MCF 10A (cell line): ENCODE measurements at regions of chr11 and their contacts with region 1.

Region 1: GRCh38 chr11:17063171-17064002 is 14.1 kb downstream of the RPS13 start:
- DNase-seq: peak; percentile 65
- H3K4me3 Mint-ChIP-seq: no peak overlapping the region
- H3K27ac Mint-ChIP-seq: no peak overlapping the region
- H3K4me1 Mint-ChIP-seq: no peaks in the 10 kb centered on the region
- H3K27me3 Mint-ChIP-seq: no peaks in the 10 kb centered on the region
- CTCF ChIP-seq: peak; percentile 80

Region 2: GRCh38 chr11:16815043-16815767 is 248.2 kb before region 1 on chr11:
- CTCF ChIA-PET with region 1: interaction called, 49 read pairs
- POLR2A ChIA-PET with region 1: interaction called, 4 read pairs
- intact Hi-C with region 1: loop called (anchors 1 kb)
- DNase-seq: no peak
- H3K4me3 Mint-ChIP-seq: no peak overlapping the region
- H3K27ac Mint-ChIP-seq: no peak overlapping the region
- H3K4me1 Mint-ChIP-seq: peaks cover 3% of the 10 kb centered on the region
- H3K27me3 Mint-ChIP-seq: no peaks in the 10 kb centered on the region
- CTCF ChIP-seq: no peak

Region 3: GRCh38 chr11:16935518-16936302 is 127.7 kb before region 1 on chr11:
- CTCF ChIA-PET with region 1: interaction called, 111 read pairs
- POLR2A ChIA-PET with region 1: interaction called, 3 read pairs
- intact Hi-C with region 1: loop called (anchors 1 kb)
- DNase-seq: peak; percentile 64
- H3K4me3 Mint-ChIP-seq: no peak overlapping the region
- H3K27ac Mint-ChIP-seq: no peak overlapping the region
- H3K4me1 Mint-ChIP-seq: no peaks in the 10 kb centered on the region
- H3K27me3 Mint-ChIP-seq: no peaks in the 10 kb centered on the region
- CTCF ChIP-seq: peak; percentile 62

Region 4: DNA sequence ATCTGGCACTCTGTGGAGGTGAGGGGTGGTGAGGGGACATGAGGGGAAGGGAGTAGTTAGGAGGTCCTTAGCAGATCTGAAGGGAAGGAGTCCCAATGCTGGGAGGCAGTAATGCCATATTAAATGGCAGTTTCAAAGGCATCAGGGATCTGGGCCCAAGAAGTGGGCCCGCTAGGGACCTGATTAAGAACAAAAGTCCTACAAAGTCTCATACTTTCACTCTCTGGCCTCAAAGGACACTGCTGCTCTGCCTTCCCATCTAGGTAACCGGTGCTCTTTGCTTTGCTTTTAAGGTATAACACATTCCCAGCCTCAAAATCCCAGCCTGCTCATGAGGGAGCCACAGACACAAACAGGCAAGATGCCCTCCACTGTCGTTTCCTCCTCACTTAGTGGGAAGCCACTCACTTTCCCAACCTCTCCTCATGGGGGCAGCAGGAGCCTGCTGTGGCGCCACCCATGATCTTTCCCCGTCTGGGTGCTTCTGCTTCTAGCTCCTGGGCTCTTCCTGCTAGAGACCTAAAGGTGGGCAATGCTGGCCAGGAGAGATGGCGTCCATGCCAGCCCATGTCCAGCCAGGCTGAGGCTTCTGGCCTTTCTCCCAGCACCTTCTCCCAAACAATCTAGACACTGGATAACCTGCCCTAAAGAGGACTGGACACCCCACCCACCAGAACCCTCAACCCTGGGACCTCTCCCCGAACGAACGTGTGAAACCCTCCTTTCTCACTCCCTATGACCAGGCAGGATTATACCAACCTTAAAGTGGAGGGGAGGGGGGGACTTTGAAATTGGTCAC is 117.5 kb before region 1 on chr11:
- CTCF ChIA-PET with region 1: interaction called, 111 read pairs
- POLR2A ChIA-PET with region 1: interaction called, 3 read pairs
- intact Hi-C with region 1: loop called (anchors 1 kb)
- DNase-seq: peak; percentile 76
- H3K4me3 Mint-ChIP-seq: no peak overlapping the region
- H3K27ac Mint-ChIP-seq: no peak overlapping the region
- H3K4me1 Mint-ChIP-seq: no peaks in the 10 kb centered on the region
- H3K27me3 Mint-ChIP-seq: no peaks in the 10 kb centered on the region
- CTCF ChIP-seq: peak; percentile 75

Region 5: DNA sequence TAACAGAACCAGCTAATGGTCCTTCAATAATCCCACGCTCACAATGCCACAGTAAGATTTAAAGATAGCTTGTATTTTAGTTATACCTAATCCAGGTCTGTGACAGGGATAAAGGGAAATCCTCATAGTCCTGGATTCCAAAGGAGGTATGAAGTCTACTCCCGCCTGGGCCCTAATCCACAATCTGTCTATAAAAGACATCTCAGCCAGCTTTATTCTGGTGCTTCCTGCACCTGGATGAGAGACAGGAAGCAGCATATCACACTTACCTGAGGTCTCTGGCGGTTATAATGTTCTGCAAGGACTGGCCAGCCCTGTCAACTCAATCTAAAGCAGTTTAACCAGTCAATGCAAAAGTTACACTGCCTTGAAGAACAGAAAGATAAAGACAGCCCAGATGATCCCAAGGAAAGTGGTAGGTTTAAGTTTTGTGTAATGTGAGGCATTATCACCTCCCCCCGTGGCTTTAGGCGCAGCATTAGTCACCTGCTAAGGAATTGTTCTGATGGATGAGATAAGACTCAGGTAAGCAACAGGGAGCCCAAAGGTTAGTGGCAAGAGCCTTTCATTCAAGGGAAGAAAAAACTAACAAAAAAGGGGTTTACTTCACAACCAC is 106.7 kb before region 1 on chr11:
- CTCF ChIA-PET with region 1: interaction called, 111 read pairs
- POLR2A ChIA-PET with region 1: interaction called, 3 read pairs
- intact Hi-C with region 1: no loop called
- DNase-seq: peak; percentile 51
- H3K4me3 Mint-ChIP-seq: no peak overlapping the region
- H3K27ac Mint-ChIP-seq: no peak overlapping the region
- H3K4me1 Mint-ChIP-seq: peaks cover 7% of the 10 kb centered on the region
- H3K27me3 Mint-ChIP-seq: no peaks in the 10 kb centered on the region
- CTCF ChIP-seq: no peak

Region 6: GRCh38 chr11:17077520-17078401 is 14.4 kb after region 1 on chr11 and contains the start of gene RPS13:
- CTCF ChIA-PET with region 1: interaction called, 14 read pairs
- POLR2A ChIA-PET with region 1: interaction called, 8 read pairs
- intact Hi-C with region 1: no loop called
- DNase-seq: peak; percentile 99
- H3K4me3 Mint-ChIP-seq: peak within 1 kb of the TSS; percentile 93
- H3K27ac Mint-ChIP-seq: peak within 1 kb of the TSS; percentile 99
- H3K4me1 Mint-ChIP-seq: peaks cover 27% of the 10 kb centered on the region
- H3K27me3 Mint-ChIP-seq: no peaks in the 10 kb centered on the region
- CTCF ChIP-seq: no peak
- total RNA-seq, gene RPS13: 1,551 and 1,734 TPM in 2 replicates

Region 7: GRCh38 chr11:17585911-17586695 is 522.7 kb after region 1 on chr11:
- CTCF ChIA-PET with region 1: no interaction called
- POLR2A ChIA-PET with region 1: no interaction called
- intact Hi-C with region 1: no loop called
- DNase-seq: no peak
- H3K4me3 Mint-ChIP-seq: no peak overlapping the region
- H3K27ac Mint-ChIP-seq: no peak overlapping the region
- H3K4me1 Mint-ChIP-seq: no peaks in the 10 kb centered on the region
- H3K27me3 Mint-ChIP-seq: peaks cover 27% of the 10 kb centered on the region
- CTCF ChIP-seq: no peak